GM12878 (cell line): ENCODE measurements at regions of chr1 and their contacts with region 1.

Region 1: DNA sequence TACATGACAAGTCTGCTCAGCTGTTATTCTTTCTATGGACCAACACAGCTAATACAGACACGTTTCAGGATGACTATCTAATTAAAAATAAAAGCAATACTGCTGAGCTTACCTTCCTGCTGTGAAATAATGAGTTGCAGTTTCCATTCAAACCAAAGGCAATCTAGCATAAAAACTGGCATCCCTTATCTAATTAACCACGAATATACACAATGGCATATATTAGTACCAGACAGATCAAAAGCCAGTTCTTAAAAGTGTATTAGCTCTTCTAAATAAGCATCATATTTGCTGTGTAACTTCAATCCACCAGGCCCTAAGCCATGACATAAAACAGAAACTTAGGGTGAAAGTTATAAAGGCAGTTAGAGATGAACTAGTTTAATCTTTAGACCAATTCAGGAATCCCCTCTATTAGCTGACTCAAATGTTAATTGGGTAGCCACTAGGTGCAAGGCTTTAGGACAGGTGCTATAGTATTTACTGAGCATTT is 20.6 kb downstream of the TESK2 start:
- DNase-seq: peak; percentile 72
- ATAC-seq: peak; percentile 82
- H3K4me3 ChIP-seq: no peak overlapping the region
- H3K27ac ChIP-seq: no peak overlapping the region
- H3K4me1 ChIP-seq: peaks cover 61% of the 10 kb centered on the region
- H3K27me3 ChIP-seq: no peaks in the 10 kb centered on the region
- CTCF ChIP-seq: no peak
- EP300 ChIP-seq: peak in 1 of 2 experiments; percentile 32; a peak in 1 of 4 replicates
- POLR2A ChIP-seq: no peak
- RAD21 ChIP-seq: no peak

Region 2: DNA sequence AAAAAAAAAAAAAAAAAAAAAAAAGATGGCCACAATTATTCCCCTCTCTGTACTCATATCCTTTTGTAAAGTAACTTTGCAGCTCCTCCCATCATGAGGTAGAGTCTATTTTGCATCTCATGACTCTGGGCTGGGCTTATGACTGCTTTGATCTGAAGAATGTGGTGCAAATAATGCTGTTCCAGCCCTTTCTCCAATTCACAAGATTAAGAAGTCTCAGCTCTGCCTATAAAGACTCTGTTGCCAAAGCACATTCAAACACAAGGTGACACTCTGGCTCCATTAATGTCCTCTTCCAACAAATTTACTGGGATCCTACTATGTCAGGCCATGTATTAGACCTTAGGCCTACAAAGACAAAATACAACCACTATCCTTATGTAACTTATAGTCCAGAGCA is 562.5 kb before region 1 on chr1:
- CTCF ChIA-PET with region 1: no interaction called
- POLR2A ChIA-PET with region 1: no interaction called
- RAD21 ChIA-PET with region 1: no interaction called
- SMC1A ChIA-PET with region 1: no interaction called
- in situ Hi-C with region 1: no loop called
- intact Hi-C with region 1: no loop called
- DNase-seq: no peak
- ATAC-seq: no peak
- H3K4me3 ChIP-seq: no peak overlapping the region
- H3K27ac ChIP-seq: no peak overlapping the region
- H3K4me1 ChIP-seq: no peaks in the 10 kb centered on the region
- H3K27me3 ChIP-seq: no peaks in the 10 kb centered on the region
- CTCF ChIP-seq: no peak
- EP300 ChIP-seq: no peak
- POLR2A ChIP-seq: no peak
- RAD21 ChIP-seq: no peak

Region 3: GRCh38 chr1:45348716-45349677 is 121.4 kb before region 1 on chr1:
- CTCF ChIA-PET with region 1: no interaction called
- POLR2A ChIA-PET with region 1: no interaction called
- RAD21 ChIA-PET with region 1: no interaction called
- SMC1A ChIA-PET with region 1: no interaction called
- in situ Hi-C with region 1: no loop called
- intact Hi-C with region 1: no loop called
- DNase-seq: no peak
- ATAC-seq: peak; percentile 37
- H3K4me3 ChIP-seq: no peak overlapping the region
- H3K27ac ChIP-seq: no peak overlapping the region
- H3K4me1 ChIP-seq: no peaks in the 10 kb centered on the region
- H3K27me3 ChIP-seq: no peaks in the 10 kb centered on the region
- CTCF ChIP-seq: no peak
- EP300 ChIP-seq: no peak
- POLR2A ChIP-seq: no peak
- RAD21 ChIP-seq: no peak

Region 4: DNA sequence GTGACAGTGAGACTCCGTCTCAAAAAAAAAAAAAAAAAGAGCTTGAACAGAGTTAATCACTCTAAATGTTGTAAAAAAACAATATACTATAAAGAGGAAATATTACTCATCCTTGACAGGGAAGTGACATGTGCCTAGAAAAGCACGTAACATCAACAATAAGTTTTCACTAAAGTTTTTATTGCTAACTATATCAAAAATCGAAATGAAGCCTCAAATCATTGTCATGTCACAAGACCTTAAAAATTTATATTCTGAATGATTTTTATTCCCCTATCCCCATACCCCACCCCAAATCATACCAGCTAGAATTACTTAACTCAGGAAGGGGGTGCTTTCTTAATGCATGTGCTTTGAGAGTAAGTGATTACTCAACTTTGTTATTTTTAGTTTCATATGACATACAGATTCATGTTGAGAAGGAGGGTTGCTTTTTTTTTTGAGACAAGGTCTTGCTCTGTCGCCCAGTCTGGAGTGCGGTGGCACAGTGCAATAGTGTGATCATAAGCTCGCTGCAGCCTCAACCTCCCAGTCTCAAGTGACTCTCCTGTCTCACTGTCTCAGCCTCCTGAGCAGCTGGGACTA is 76.5 kb before region 1 on chr1:
- CTCF ChIA-PET with region 1: interaction called, 3 read pairs
- POLR2A ChIA-PET with region 1: interaction called, 12 read pairs
- RAD21 ChIA-PET with region 1: interaction called, 3 read pairs
- SMC1A ChIA-PET with region 1: interaction called, 8 read pairs
- in situ Hi-C with region 1: no loop called
- intact Hi-C with region 1: no loop called
- DNase-seq: peak; percentile 49
- ATAC-seq: peak; percentile 94
- H3K4me3 ChIP-seq: no peak overlapping the region
- H3K27ac ChIP-seq: peak overlapping the region; percentile 90
- H3K4me1 ChIP-seq: peaks cover 22% of the 10 kb centered on the region
- H3K27me3 ChIP-seq: no peaks in the 10 kb centered on the region
- CTCF ChIP-seq: no peak
- EP300 ChIP-seq: 0 out of 4 replicates have a peak, but pooled peaks of 1 of the 2 experiments have one; percentile 9
- POLR2A ChIP-seq: 0 out of 2 replicates have a peak, but pooled peaks have one; percentile 29
- RAD21 ChIP-seq: no peak

Region 5: DNA sequence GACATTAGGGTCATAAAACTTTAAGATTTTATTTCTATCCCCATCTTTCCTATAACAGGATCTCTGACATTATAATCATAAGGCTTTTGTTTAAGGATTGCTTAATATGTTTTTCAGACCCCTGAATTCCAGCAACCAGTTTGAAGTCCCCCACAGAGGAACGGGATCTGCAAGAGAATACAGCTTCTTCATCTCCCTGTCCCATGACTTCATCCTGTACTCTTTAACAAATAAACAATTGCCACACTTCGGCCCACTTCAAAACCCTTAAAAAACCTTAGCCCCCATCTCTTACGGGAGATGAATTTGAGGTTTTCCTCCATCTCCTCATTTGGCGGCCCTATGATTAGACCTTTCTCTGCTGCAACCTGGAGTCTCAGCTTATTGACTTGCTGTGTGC is 15.2 kb before region 1 on chr1:
- CTCF ChIA-PET with region 1: interaction called, 3 read pairs
- POLR2A ChIA-PET with region 1: interaction called, 3 read pairs
- RAD21 ChIA-PET with region 1: interaction called, 10 read pairs
- SMC1A ChIA-PET with region 1: interaction called, 3 read pairs
- in situ Hi-C with region 1: no loop called
- intact Hi-C with region 1: no loop called
- DNase-seq: no peak
- ATAC-seq: no peak
- H3K4me3 ChIP-seq: no peak overlapping the region
- H3K27ac ChIP-seq: no peak overlapping the region
- H3K4me1 ChIP-seq: peaks cover 4% of the 10 kb centered on the region; the same call in 1 of the 2 replicates
- H3K27me3 ChIP-seq: no peaks in the 10 kb centered on the region
- CTCF ChIP-seq: no peak
- EP300 ChIP-seq: no peak
- POLR2A ChIP-seq: no peak
- RAD21 ChIP-seq: no peak

Region 6: DNA sequence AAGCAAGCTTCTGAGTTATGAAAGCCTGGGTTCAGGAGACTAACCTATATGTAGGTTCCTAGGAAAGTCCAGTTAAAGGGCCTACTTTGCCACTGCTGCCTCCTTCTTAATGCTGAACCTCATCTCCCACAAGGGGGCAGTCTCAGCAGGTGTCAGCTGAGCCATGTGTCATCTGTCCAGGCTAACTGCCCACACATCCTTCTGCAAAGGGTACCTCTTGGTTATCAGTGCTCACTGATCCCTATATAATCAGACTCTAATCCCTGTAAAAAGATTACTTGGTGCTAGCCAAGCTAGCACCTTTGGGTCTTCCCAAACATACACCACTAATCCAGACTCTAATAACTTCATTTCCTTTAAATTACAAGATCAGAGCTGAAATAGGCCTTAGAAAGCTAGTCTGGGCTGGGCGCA is 42.3 kb after region 1 on chr1:
- CTCF ChIA-PET with region 1: no interaction called
- POLR2A ChIA-PET with region 1: no interaction called
- RAD21 ChIA-PET with region 1: no interaction called
- SMC1A ChIA-PET with region 1: no interaction called
- in situ Hi-C with region 1: no loop called
- intact Hi-C with region 1: no loop called
- DNase-seq: no peak
- ATAC-seq: peak; percentile 86
- H3K4me3 ChIP-seq: no peak overlapping the region
- H3K27ac ChIP-seq: no peak overlapping the region
- H3K4me1 ChIP-seq: no peaks in the 10 kb centered on the region
- H3K27me3 ChIP-seq: no peaks in the 10 kb centered on the region
- CTCF ChIP-seq: peak; percentile 74 to 80 (median 75)
- EP300 ChIP-seq: no peak
- POLR2A ChIP-seq: no peak
- RAD21 ChIP-seq: peak; percentile 82